AG04449 (cell line): ENCODE measurements at regions of chr14 and their contacts with region 1.

Region 1: DNA sequence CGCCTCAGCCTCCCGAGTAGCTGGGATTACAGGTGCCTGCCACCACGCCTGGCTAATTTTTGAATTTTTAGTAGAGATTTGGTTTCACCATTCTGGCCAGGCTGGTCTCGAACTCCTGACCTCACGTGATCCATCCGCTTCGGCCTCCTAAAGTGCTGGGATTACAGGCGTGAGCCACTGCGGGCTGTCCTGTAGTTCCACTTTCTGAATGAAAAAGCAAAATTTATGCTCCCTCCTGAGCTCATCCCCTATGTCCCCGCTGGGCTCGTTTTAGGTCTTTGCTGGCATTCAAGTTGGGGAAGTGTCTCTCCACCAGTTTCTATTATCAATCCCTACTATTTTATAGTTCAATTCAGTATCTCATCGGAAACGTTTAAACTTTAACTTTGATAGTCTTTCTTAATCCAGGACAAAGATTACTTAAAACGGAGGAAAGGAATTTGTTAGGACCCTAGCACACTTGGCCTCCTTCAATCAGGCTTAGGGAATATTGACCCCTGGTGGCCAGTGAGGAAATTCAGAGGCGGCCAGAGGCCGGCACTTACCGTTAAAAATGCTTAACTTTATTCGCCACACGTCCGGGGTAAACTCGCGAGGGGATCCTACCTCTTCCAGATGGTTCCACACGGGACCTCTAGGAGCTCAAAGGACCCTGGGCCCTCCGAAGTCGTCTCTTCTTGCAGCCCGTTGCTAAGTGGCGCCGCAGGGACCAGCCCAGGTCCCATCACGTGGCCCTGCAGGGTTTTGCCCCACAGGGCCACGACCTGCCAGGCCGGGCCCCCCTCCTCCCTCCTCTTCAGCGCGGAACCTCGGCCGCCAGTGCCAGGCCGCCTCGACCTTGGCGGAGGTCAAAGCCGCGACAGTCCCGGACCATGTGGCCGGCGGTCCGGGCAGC is 11.4 kb upstream of the DNAL1 start:
- DNase-seq: no peak
- H3K4me3 ChIP-seq: peak overlapping the region; percentile 52
- CTCF ChIP-seq: peak; percentile 71

Region 2: DNA sequence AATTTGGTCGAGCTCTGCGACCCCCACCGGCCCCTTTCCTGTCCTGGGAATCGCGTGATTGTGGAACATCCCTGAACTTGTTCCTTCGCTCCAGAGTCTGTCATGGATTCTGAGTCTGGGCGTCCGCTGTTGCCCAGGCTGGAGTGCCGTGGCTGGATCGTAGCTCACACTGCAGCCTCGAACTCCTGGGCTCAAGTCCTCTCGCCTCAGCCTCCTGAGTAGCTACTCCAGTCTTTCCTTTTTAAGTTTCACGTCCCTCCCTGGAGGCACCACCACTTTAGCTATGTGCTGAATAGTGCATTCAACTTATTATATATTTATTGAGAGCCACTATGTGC is 20.3 kb before region 1 on chr14:
- CTCF ChIA-PET with region 1: interaction called, 13 read pairs
- POLR2A ChIA-PET with region 1: no interaction called
- DNase-seq: no peak
- H3K4me3 ChIP-seq: peak overlapping the region; percentile 64
- CTCF ChIP-seq: no peak

Region 3: GRCh38 chr14:73620268-73620667 is 13.1 kb before region 1 on chr14:
- CTCF ChIA-PET with region 1: interaction called, 15 read pairs
- POLR2A ChIA-PET with region 1: no interaction called
- DNase-seq: no peak
- H3K4me3 ChIP-seq: no peak overlapping the region
- CTCF ChIP-seq: no peak

Region 4: GRCh38 chr14:73644531-73645247 is 11.3 kb after region 1 on chr14 and contains the start of gene DNAL1:
- CTCF ChIA-PET with region 1: interaction called, 29 read pairs
- POLR2A ChIA-PET with region 1: no interaction called
- DNase-seq: no peak
- H3K4me3 ChIP-seq: peak within 1 kb of the TSS; percentile 96
- CTCF ChIP-seq: no peak